MCF 10A (cell line): ENCODE measurements at regions of chr16 and their contacts with region 1.

Region 1: DNA sequence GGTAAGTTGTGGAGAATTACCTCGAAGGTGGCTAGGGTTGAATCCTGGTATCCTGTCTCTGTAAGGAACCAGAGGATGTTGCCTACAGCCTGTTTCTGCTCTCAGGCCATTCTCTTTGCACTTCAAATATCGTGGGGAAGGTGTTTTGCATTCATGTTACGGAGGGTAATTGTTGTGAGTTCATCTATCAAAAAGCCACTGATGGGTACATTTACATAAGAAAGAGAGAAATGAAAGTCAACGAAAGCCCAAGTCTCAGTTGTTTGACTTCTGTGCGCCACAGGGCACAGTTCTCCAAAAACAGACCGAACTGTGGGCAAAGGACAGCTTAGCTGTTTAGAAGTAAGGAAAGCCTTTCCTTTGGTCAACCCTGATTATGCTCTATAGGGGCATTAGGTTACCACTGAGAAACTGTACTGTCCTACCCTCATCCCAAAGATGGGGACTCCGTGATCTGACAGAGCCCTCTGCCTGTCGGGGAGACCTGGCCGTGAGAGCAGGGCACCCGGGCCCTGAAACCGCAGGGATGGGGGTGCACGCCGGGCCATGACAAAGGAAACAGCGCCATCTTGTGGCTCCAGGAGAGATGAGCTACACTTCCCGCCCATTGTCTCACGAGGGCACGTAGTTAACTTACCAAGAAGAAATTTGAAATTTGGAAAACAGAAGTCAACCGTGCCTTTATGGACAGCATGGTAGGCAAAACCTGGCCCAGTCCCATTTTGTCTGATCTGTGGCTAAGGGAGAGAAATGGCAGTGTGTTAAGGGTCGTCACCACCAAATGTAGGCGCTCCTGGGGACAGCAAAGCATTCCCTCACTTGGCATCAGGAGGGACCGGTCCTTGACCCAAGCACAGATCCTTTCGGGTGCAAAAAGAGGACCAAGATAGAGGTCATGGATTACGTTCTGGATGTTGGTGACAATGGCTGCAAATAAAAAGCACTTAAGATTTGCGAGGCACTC is 74.5 kb upstream of the DYNLRB2 start:
- DNase-seq: peak; percentile 68
- H3K4me3 Mint-ChIP-seq: no peak overlapping the region
- H3K27ac Mint-ChIP-seq: no peak overlapping the region
- H3K4me1 Mint-ChIP-seq: peaks cover 10% of the 10 kb centered on the region
- H3K27me3 Mint-ChIP-seq: peaks cover 14% of the 10 kb centered on the region
- CTCF ChIP-seq: peak; percentile 88

Region 2: GRCh38 chr16:78503602-78504001 is 1962.7 kb before region 1 on chr16:
- CTCF ChIA-PET with region 1: interaction called, 4 read pairs
- POLR2A ChIA-PET with region 1: no interaction called
- intact Hi-C with region 1: loop called (anchors 10 kb)
- DNase-seq: peak; percentile 56
- H3K4me3 Mint-ChIP-seq: no peak overlapping the region
- H3K27ac Mint-ChIP-seq: no peak overlapping the region
- H3K4me1 Mint-ChIP-seq: peaks cover 7% of the 10 kb centered on the region
- H3K27me3 Mint-ChIP-seq: no peaks in the 10 kb centered on the region
- CTCF ChIP-seq: peak; percentile 89

Region 3: GRCh38 chr16:78925083-78925767 is 1541.1 kb before region 1 on chr16:
- CTCF ChIA-PET with region 1: no interaction called
- POLR2A ChIA-PET with region 1: no interaction called
- intact Hi-C with region 1: loop called (anchors 5 kb)
- DNase-seq: peak; percentile 33
- H3K4me3 Mint-ChIP-seq: no peak overlapping the region
- H3K27ac Mint-ChIP-seq: no peak overlapping the region
- H3K4me1 Mint-ChIP-seq: no peaks in the 10 kb centered on the region
- H3K27me3 Mint-ChIP-seq: no peaks in the 10 kb centered on the region
- CTCF ChIP-seq: peak; percentile 53

Region 4: DNA sequence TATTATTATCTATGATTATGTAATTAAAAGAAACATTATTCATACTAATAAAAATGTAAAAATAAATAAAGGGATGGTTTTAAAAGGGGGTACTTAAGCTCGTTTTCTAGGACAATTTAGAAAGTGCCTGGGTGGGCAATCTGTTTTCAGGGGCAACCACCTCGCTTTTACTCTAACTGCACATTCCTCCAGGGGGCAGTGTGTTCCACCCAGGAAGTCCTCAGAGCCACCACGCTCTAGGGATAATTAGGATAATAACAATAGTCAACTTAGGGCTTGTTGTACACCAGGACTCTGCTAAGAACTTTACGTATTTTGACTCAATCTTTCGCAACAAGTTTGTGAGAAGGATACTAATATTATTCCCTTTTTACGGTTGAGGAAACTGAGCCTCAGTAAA is 469.0 kb before region 1 on chr16:
- CTCF ChIA-PET with region 1: no interaction called
- POLR2A ChIA-PET with region 1: no interaction called
- intact Hi-C with region 1: loop called (anchors 10 kb)
- DNase-seq: peak; percentile 46
- H3K4me3 Mint-ChIP-seq: no peak overlapping the region
- H3K27ac Mint-ChIP-seq: no peak overlapping the region
- H3K4me1 Mint-ChIP-seq: peaks cover 11% of the 10 kb centered on the region
- H3K27me3 Mint-ChIP-seq: no peaks in the 10 kb centered on the region
- CTCF ChIP-seq: peak; percentile 37

Region 5: GRCh38 chr16:80084685-80085084 is 381.6 kb before region 1 on chr16:
- CTCF ChIA-PET with region 1: interaction called, 3 read pairs
- POLR2A ChIA-PET with region 1: no interaction called
- intact Hi-C with region 1: loop called (anchors 5 kb)
- DNase-seq: peak; percentile 61
- H3K4me3 Mint-ChIP-seq: no peak overlapping the region
- H3K27ac Mint-ChIP-seq: no peak overlapping the region
- H3K4me1 Mint-ChIP-seq: peaks cover 6% of the 10 kb centered on the region
- H3K27me3 Mint-ChIP-seq: no peaks in the 10 kb centered on the region
- CTCF ChIP-seq: peak; percentile 48

Region 6: DNA sequence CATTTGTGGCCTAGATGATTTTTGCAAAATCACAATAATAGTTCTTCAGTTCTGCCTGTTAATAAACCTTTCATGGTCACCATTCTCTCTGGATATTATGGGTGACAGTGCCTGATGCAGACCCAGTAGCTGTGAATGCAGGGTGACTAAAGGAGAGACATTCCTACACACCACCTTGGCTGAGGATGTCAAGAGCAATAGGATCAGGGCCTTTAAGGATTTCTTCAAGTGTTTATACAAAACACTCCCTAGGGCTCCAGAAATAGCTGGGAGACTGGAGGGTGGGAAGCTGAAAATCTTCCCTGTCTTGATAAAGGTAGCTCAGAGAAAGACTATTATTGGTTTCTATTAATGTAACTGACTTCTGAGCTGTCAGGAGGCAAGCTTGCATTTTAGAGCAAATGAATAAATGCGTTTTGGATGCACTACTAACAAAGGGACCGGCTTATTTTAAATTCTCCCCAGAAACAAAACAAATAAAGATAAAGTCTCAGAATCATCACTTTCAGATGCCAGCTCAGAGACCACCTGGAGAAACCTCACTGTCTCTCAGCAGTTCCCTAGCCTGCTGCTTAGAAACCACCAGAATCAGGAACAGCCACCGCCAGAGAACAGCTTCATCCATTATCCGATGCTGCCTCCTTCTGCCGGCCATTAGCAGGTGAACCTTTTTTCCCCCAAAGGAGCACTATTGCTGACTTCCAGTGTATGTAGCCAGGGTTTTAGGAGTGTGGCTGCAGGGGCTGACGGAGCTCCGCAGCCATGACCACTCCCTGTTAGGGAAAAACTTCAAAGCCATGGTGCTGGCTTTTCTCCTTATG is 97.0 kb before region 1 on chr16:
- CTCF ChIA-PET with region 1: interaction called, 3 read pairs
- POLR2A ChIA-PET with region 1: no interaction called
- intact Hi-C with region 1: loop called (anchors 1 kb)
- DNase-seq: peak; percentile 27
- H3K4me3 Mint-ChIP-seq: no peak overlapping the region
- H3K27ac Mint-ChIP-seq: no peak overlapping the region
- H3K4me1 Mint-ChIP-seq: no peaks in the 10 kb centered on the region
- H3K27me3 Mint-ChIP-seq: no peaks in the 10 kb centered on the region
- CTCF ChIP-seq: peak; percentile 42

Region 7: GRCh38 chr16:80480664-80481063 is 14.4 kb after region 1 on chr16:
- CTCF ChIA-PET with region 1: interaction called, 14 read pairs
- POLR2A ChIA-PET with region 1: no interaction called
- intact Hi-C with region 1: no loop called
- DNase-seq: no peak
- H3K4me3 Mint-ChIP-seq: no peak overlapping the region
- H3K27ac Mint-ChIP-seq: no peak overlapping the region
- H3K4me1 Mint-ChIP-seq: no peaks in the 10 kb centered on the region
- H3K27me3 Mint-ChIP-seq: peaks cover 32% of the 10 kb centered on the region
- CTCF ChIP-seq: no peak